Endothelial cell of umbilical vein (primary cell): ENCODE measurements at regions of chr7 and their contacts with region 1.

Region 1: GRCh38 chr7:46352004-46352954 is 431.2 kb upstream of the IGFBP3 start:
- DNase-seq: peak; percentile 65
- H3K4me3 ChIP-seq: no peak overlapping the region
- H3K27ac ChIP-seq: no peak overlapping the region
- H3K4me1 ChIP-seq: no peaks in the 10 kb centered on the region
- H3K27me3 ChIP-seq: peaks cover 0 to 2% of the 10 kb centered on the region in 2 experiments
- CTCF ChIP-seq: peak; percentile 37 to 53
- POLR2A ChIP-seq: no peak

Region 2: DNA sequence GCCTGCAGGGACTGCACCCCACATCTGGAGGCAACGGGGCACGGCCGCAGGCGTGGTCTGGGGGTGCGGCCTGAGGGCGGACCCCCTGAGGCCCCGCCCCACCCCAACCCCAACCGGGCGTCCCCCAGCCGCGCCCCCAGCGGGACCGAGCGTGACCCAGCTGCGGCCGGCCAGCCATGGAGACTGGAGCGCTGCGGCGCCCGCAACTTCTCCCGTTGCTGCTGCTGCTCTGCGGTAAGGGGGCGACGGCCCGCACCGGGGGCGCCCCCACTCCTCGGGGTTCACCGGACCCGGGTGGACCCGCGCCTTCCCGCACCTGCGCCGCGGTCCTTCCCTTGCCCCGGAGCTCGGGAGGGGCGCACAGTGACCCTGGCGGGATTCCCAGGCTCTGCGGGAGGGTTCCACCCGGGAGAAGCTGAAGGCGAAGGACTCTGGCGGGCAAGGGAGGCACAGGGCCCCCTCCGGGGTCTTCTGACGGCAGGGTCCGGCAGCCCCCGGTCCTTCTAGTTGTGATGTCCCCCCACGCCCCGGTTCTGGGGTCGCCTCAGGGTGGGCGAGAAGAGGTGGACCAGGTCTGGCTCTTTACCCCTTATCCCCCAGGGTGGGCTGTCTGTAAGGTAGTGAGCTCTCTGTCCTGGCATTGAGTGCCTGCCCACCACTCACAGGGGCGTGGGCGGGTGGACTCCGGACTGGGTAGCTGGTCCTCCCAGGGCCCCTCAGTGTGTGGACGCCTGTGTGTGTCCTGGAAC is 1194.5 kb before region 1 on chr7 and contains the start of gene RAMP3:
- CTCF ChIA-PET with region 1: no interaction called
- POLR2A ChIA-PET with region 1: no interaction called
- dilution Hi-C with region 1: no loop called
- intact Hi-C with region 1: loop called (anchors 1 kb)
- DNase-seq: no peak
- H3K4me3 ChIP-seq: no peak within 1 kb of the TSS
- H3K27ac ChIP-seq: no peak within 1 kb of the TSS
- H3K4me1 ChIP-seq: no peaks in the 10 kb centered on the region
- H3K27me3 ChIP-seq: peaks cover 21 to 23% of the 10 kb centered on the region in 2 experiments
- CTCF ChIP-seq: no peak
- POLR2A ChIP-seq: no peak
- total RNA-seq, gene RAMP3: not detected in 2 replicates

Region 3: DNA sequence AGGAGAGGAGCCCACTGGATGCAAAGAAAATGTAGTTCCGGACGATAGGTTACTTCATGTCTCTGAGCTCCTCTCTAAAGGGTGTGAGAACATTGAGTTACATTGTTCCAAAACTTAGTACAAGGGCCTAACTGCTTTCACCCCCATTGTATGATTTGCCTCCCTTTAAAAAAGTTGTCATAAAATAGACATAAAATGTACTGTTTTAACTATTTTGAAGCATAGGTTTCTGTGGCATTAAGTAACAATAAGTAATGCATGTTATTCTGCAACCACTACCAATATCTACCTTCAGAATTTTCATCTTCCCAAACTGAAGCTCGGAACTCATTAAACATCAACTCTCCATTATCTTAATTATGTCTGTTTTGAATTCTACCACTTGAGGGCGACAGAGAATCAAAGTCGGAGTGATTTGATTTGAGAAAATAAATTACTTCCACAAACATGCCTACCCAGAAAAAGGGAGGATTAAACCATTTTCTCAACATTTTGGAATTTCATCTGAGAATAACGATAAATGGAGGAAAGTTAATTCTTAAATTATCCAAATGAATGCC is 461.3 kb before region 1 on chr7:
- CTCF ChIA-PET with region 1: no interaction called
- POLR2A ChIA-PET with region 1: no interaction called
- dilution Hi-C with region 1: no loop called
- intact Hi-C with region 1: loop called (anchors 1 kb)
- DNase-seq: peak; percentile 62
- H3K4me3 ChIP-seq: no peak overlapping the region
- H3K27ac ChIP-seq: peak overlapping the region; percentile 30
- H3K4me1 ChIP-seq: peaks cover 46% of the 10 kb centered on the region
- H3K27me3 ChIP-seq: peaks cover 0 to 1% of the 10 kb centered on the region in 2 experiments
- CTCF ChIP-seq: peak; percentile 20 to 40
- POLR2A ChIP-seq: no peak

Region 4: DNA sequence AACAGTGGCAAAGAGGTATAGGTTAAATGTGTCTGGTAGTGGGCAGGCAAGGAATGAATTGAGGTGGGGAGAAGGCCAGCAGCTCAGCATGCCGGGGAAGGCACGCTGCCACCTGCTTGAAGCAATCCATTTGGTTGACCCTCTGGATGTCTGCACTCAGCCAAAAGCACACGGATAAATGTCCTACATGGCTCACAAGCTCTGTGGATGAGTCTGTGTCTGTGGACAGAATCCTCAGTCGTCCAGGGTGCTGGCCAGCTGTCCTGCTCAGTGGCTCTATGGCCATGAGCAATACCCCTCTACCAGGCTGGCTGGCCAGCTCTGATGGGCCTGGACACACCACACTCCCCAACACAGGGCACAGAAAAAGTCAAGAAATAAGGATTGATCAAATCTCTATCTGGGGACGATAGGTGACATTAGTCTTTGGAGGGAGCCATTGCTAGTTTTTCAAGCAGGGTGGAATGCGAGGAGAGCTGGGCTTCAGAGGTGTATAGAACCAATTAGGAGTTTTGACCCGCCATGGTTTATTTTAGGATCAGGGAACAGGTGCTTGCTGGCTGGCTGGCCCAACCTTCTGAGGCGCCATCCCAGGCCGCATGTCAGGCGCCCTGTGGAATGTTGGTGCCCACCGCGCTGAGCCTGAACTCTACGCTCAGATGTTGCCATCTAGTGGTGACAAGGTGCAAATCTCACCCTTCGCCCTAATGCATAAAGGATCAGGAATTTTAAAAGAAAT is 736.2 kb after region 1 on chr7:
- CTCF ChIA-PET with region 1: no interaction called
- POLR2A ChIA-PET with region 1: no interaction called
- dilution Hi-C with region 1: no loop called
- intact Hi-C with region 1: loop called (anchors 1 kb)
- DNase-seq: peak; percentile 65
- H3K4me3 ChIP-seq: no peak overlapping the region
- H3K27ac ChIP-seq: no peak overlapping the region
- H3K4me1 ChIP-seq: no peaks in the 10 kb centered on the region
- H3K27me3 ChIP-seq: no peaks in the 10 kb centered on the region
- CTCF ChIP-seq: peak; percentile 74 to 75
- POLR2A ChIP-seq: no peak

Region 5: GRCh38 chr7:47254081-47255006 is 902.1 kb after region 1 on chr7:
- CTCF ChIA-PET with region 1: no interaction called
- POLR2A ChIA-PET with region 1: no interaction called
- dilution Hi-C with region 1: no loop called
- intact Hi-C with region 1: loop called (anchors 10 kb)
- DNase-seq: peak; percentile 55
- H3K4me3 ChIP-seq: peak overlapping the region; percentile 59 to 69 (median 68)
- H3K27ac ChIP-seq: peak overlapping the region; percentile 58
- H3K4me1 ChIP-seq: peaks cover 15% of the 10 kb centered on the region
- H3K27me3 ChIP-seq: peaks cover 0 to 1% of the 10 kb centered on the region in 2 experiments
- CTCF ChIP-seq: peak; percentile 64 to 90
- POLR2A ChIP-seq: no peak